ENCODE measurements at regions of chrX and their contacts with region 1.

Region 1: DNA sequence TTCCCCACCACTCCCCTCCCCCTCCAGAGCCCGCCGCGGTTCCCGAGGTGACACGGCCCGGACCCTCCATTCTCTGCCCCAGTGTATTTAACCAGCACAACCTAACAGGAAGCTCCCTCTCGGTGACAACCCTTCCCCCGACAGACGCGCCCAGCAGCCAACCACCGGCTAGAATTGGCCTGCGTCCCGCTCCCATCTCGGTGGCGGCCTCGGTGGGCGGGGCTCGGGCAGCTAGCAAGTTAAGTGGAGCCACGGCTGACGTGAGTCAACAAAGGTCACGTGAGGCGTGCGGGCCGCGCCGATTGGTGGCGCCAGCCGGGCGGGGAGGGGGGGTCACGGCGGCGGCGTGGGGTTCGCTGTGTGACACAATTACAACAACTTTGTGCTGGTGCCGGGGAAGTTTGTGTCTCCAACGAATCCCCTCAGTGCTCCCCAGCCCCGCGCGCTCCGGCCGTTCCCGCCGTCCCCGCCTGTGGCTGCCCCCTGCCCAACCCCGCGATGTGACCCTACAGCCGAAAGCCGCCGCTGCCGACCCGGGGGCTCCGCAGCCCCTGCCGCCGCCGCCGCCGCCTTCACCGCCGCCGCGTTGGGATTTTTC is at the start of gene KDM6A:
- DNase-seq: peak; percentile 94
- H3K4me3 ChIP-seq: peak within 1 kb of the TSS; percentile 87
- H3K27ac ChIP-seq: peak within 1 kb of the TSS; percentile 87
- H3K4me1 ChIP-seq: peaks cover 5% of the 10 kb centered on the region
- CTCF ChIP-seq: no peak
- total RNA-seq, gene KDM6A: 18.8 and 20.5 TPM in 2 replicates

Region 2: GRCh38 chrX:44203791-44204190 is 669.1 kb before region 1 on chrX:
- CTCF ChIA-PET with region 1: no interaction called
- POLR2A ChIA-PET with region 1: no interaction called
- intact Hi-C with region 1: no loop called
- DNase-seq: no peak
- H3K4me3 ChIP-seq: no peak overlapping the region
- H3K27ac ChIP-seq: no peak overlapping the region
- H3K4me1 ChIP-seq: no peaks in the 10 kb centered on the region
- CTCF ChIP-seq: 0 out of 2 replicates have a peak, but pooled peaks have one; percentile 21

Region 3: GRCh38 chrX:44305921-44306735 is 566.8 kb before region 1 on chrX:
- CTCF ChIA-PET with region 1: no interaction called
- POLR2A ChIA-PET with region 1: no interaction called
- intact Hi-C with region 1: no loop called
- DNase-seq: no peak
- H3K4me3 ChIP-seq: no peak overlapping the region
- H3K27ac ChIP-seq: no peak overlapping the region
- H3K4me1 ChIP-seq: no peaks in the 10 kb centered on the region
- CTCF ChIP-seq: no peak

Region 4: GRCh38 chrX:44542567-44543325 is 330.2 kb before region 1 on chrX and contains the start of gene FUNDC1:
- CTCF ChIA-PET with region 1: interaction called, 4 read pairs
- POLR2A ChIA-PET with region 1: no interaction called
- intact Hi-C with region 1: loop called (anchors 2 kb)
- DNase-seq: peak; percentile 91
- H3K4me3 ChIP-seq: peak within 1 kb of the TSS; percentile 89
- H3K27ac ChIP-seq: peak within 1 kb of the TSS; percentile 36
- H3K4me1 ChIP-seq: peaks cover 12% of the 10 kb centered on the region
- CTCF ChIP-seq: peak; percentile 66
- total RNA-seq, gene FUNDC1: 10.2 and 15.5 TPM in 2 replicates

Region 5: GRCh38 chrX:44906041-44906440 is 33.1 kb after region 1 on chrX:
- CTCF ChIA-PET with region 1: no interaction called
- POLR2A ChIA-PET with region 1: interaction called, 4 read pairs
- intact Hi-C with region 1: loop called (anchors 2 kb)
- DNase-seq: peak; percentile 52
- H3K4me3 ChIP-seq: peak overlapping the region; percentile 62
- H3K27ac ChIP-seq: peak overlapping the region; percentile 63
- H3K4me1 ChIP-seq: peaks cover 60% of the 10 kb centered on the region
- CTCF ChIP-seq: no peak

Region 6: DNA sequence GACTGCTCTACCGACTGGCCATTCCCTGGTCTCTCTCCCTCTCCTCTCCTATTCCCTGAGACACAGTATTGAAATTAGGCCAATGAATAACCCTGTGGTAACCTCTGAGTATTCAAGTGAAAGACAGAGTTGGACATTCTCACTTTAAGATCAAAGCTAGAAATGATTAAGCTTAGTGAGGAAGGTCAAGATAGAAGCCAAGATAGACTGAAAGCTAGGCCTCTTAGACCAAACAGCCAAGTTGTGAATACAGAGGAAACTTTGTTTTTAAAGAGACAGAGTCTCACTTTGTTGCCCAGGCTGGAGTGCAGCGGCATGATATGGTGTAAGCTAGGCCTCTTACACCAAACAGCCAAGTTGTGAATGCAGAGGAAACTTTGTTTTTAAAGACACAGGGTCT is 64.7 kb after region 1 on chrX:
- CTCF ChIA-PET with region 1: no interaction called
- POLR2A ChIA-PET with region 1: no interaction called
- intact Hi-C with region 1: no loop called
- DNase-seq: no peak
- H3K4me3 ChIP-seq: no peak overlapping the region
- H3K27ac ChIP-seq: no peak overlapping the region
- H3K4me1 ChIP-seq: no peaks in the 10 kb centered on the region
- CTCF ChIP-seq: no peak

Region 7: GRCh38 chrX:45070116-45071007 is 197.4 kb after region 1 on chrX:
- CTCF ChIA-PET with region 1: no interaction called
- POLR2A ChIA-PET with region 1: interaction called, 4 read pairs
- intact Hi-C with region 1: loop called (anchors 5 kb)
- DNase-seq: peak; percentile 54
- H3K4me3 ChIP-seq: no peak overlapping the region
- H3K27ac ChIP-seq: no peak overlapping the region
- H3K4me1 ChIP-seq: peaks cover 11% of the 10 kb centered on the region
- CTCF ChIP-seq: peak; percentile 78